ENCODE measurements at regions of chr16 and their contacts with region 1.

Region 1: GRCh38 chr16:81723098-81723723 is 55.9 kb upstream of the PLCG2 start:
- DNase-seq: peak in 3 of 4 donors; percentile 30 to 70 (median 53)
- ATAC-seq: peak; percentile 87
- H3K4me3 ChIP-seq: no peak overlapping the region
- H3K27ac ChIP-seq: no peak overlapping the region
- H3K4me1 ChIP-seq: no peaks in the 10 kb centered on the region
- H3K27me3 ChIP-seq: peaks cover 0 to 4% of the 10 kb centered on the region in 2 donors
- CTCF ChIP-seq: peak; percentile 46 to 85 (median 78)
- POLR2A ChIP-seq: no peak

Region 2: DNA sequence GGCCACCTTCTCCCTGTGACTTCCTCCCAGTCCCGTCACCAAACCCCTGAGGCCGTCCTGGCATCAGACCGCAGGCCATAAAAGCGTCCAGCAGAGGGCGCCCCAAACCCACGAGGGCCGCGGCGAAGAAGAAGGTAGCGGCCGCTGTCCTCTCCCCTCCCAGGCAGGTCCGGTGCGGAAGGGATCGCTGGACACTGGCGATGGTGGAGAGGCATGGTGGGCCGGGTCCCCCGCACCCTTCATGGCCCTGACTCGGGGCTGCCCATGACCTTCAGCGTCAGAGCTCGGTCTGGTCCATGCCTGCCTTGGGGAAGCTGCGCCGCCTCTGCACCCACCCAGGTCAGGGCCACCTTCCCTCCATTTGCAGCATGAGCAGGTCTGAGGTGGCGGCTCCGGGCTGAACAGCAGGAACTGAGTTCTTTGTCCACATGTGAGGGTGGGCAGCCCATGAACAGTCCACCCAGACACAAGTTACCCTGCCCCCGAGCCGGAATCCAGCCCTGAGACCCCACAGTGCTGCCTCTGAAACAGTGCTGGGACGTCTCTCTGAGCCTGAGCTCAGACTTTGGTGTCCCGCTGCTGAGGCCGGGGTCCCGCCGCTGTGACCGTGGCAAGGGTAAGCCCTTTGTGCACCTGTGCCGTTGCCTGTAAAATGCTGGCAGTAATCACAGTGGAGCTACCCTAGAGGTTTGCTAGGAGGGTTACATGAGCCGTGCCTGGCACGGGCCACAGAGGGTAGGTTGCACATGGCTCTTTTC is 319.4 kb before region 1 on chr16:
- intact Hi-C with region 1: loop called (anchors 5 kb)
- DNase-seq: peak; percentile 84 to 87 (median 85)
- ATAC-seq: peak; percentile 89
- H3K4me3 ChIP-seq: no peak overlapping the region
- H3K27ac ChIP-seq: no peak overlapping the region
- H3K4me1 ChIP-seq: peaks cover 5% of the 10 kb centered on the region
- H3K27me3 ChIP-seq: no peaks in the 10 kb centered on the region
- CTCF ChIP-seq: peak; percentile 89 to 96 (median 94)
- POLR2A ChIP-seq: no peak

Region 3: GRCh38 chr16:81632392-81633146 is 90.6 kb before region 1 on chr16:
- intact Hi-C with region 1: loop called (anchors 10 kb)
- DNase-seq: peak in 1 of 4 donors; percentile 60
- ATAC-seq: no peak
- H3K4me3 ChIP-seq: no peak overlapping the region
- H3K27ac ChIP-seq: no peak overlapping the region
- H3K4me1 ChIP-seq: peaks cover 15% of the 10 kb centered on the region
- H3K27me3 ChIP-seq: no peaks in the 10 kb centered on the region
- CTCF ChIP-seq: no peak
- POLR2A ChIP-seq: no peak

Measured in body of pancreas (tissue), 4 donors.